ENCODE measurements at regions of chr1 and their contacts with region 1.

Region 1: DNA sequence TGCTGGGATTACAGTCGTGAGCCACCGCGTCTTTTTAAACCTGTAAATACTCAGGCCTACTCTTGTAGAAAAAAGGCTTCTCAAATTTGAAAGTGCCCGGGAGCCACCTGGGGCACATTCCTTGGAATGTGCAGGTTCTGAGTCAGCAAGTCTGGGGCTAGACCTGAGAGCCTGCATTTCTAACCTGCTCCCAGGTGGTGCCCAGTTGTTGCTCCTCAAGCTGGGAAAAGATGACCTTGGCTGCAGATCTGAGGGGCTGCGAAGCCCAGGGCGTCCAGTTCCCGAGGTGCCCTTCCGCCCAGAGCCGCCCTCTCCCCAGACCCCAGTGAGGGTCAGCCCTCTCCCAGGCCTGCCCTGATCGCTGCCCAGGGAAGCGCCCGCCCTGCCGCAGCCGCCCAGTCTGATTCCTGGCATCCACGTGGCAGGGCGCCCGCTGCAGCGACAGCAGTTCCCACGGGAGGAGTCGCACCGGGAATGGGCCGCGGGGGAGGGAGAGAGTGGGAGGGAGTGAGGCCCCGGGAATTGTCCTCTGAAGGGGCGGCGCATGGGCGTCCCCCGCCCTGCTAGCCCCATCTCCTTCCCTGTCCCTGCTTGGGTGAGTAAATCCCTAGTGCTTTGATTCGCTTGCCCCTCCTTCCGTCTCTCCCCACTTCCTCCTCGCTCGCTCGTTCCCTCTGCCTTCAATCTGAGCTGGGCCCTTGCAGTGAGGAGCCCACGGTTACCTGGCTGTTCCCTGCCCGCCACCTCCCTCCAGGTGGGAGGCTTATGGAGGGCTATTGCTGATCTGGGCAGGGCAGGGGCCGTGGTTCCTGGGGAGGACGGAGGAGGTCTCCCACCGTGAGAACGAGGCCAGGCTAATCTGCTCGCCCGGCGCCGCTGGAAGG is 18.8 kb upstream of the TENT5B start:
- DNase-seq: no peak
- ATAC-seq: no peak
- H3K4me3 ChIP-seq: no peak overlapping the region
- H3K27ac ChIP-seq: no peak overlapping the region
- H3K4me1 ChIP-seq: no peaks in the 10 kb centered on the region
- H3K27me3 ChIP-seq: no peaks in the 10 kb centered on the region
- CTCF ChIP-seq: no peak

Region 2: GRCh38 chr1:26907071-26907917 is 124.2 kb before region 1 on chr1:
- CTCF ChIA-PET with region 1: no interaction called
- POLR2A ChIA-PET with region 1: no interaction called
- in situ Hi-C with region 1: no loop called
- intact Hi-C with region 1: no loop called
- DNase-seq: peak; percentile 79
- ATAC-seq: peak; percentile 94
- H3K4me3 ChIP-seq: no peak overlapping the region
- H3K27ac ChIP-seq: peak overlapping the region; percentile 54
- H3K4me1 ChIP-seq: peaks cover 26% of the 10 kb centered on the region
- H3K27me3 ChIP-seq: no peaks in the 10 kb centered on the region
- CTCF ChIP-seq: no peak

Region 3: DNA sequence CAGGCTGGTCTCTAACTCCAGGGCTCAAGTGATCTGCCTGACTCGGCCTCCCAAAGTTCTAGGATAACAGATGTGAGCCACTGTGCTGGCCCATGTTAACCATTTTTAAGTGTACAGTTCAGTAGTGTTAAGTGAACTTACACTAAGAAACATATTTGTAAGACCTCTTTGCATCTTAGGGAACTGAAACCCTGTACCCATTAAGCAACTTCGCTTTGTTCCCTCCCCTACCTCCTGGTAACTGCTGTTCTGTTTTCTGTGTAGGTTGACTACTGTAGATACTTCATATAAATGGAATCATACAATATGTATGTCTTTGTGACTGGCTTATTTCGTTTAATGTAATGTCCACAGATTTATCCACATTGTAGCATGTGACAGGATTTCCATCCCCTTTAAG is 98.9 kb before region 1 on chr1:
- CTCF ChIA-PET with region 1: no interaction called
- POLR2A ChIA-PET with region 1: interaction called, 13 read pairs
- in situ Hi-C with region 1: no loop called
- intact Hi-C with region 1: no loop called
- DNase-seq: no peak
- ATAC-seq: no peak
- H3K4me3 ChIP-seq: no peak overlapping the region
- H3K27ac ChIP-seq: no peak overlapping the region
- H3K4me1 ChIP-seq: no peaks in the 10 kb centered on the region
- H3K27me3 ChIP-seq: no peaks in the 10 kb centered on the region
- CTCF ChIP-seq: no peak

Region 4: GRCh38 chr1:27284425-27285273 is 253.2 kb after region 1 on chr1:
- CTCF ChIA-PET with region 1: no interaction called
- POLR2A ChIA-PET with region 1: interaction called, 14 read pairs
- in situ Hi-C with region 1: no loop called
- intact Hi-C with region 1: no loop called
- DNase-seq: peak; percentile 52
- ATAC-seq: peak; percentile 96
- H3K4me3 ChIP-seq: no peak overlapping the region
- H3K27ac ChIP-seq: no peak overlapping the region
- H3K4me1 ChIP-seq: no peaks in the 10 kb centered on the region
- H3K27me3 ChIP-seq: no peaks in the 10 kb centered on the region
- CTCF ChIP-seq: peak; percentile 89